Gastrocnemius medialis (tissue), 4 donors: ENCODE measurements at regions of chr5 and their contacts with region 1.

Region 1: GRCh38 chr5:38666668-38667498 is 110.4 kb upstream of the LIFR start:
- DNase-seq: peak; percentile 38 to 61
- ATAC-seq: peak; percentile 92 to 97
- H3K4me3 ChIP-seq: no peak overlapping the region
- H3K27ac ChIP-seq: peak overlapping the region; percentile 44 to 79 (median 70)
- H3K4me1 ChIP-seq: peaks cover 30 to 33% of the 10 kb centered on the region in 2 donors
- H3K27me3 ChIP-seq: no peaks in the 10 kb centered on the region
- CTCF ChIP-seq: peak; percentile 67 to 86 (median 84)
- POLR2A ChIP-seq: no peak

Region 2: DNA sequence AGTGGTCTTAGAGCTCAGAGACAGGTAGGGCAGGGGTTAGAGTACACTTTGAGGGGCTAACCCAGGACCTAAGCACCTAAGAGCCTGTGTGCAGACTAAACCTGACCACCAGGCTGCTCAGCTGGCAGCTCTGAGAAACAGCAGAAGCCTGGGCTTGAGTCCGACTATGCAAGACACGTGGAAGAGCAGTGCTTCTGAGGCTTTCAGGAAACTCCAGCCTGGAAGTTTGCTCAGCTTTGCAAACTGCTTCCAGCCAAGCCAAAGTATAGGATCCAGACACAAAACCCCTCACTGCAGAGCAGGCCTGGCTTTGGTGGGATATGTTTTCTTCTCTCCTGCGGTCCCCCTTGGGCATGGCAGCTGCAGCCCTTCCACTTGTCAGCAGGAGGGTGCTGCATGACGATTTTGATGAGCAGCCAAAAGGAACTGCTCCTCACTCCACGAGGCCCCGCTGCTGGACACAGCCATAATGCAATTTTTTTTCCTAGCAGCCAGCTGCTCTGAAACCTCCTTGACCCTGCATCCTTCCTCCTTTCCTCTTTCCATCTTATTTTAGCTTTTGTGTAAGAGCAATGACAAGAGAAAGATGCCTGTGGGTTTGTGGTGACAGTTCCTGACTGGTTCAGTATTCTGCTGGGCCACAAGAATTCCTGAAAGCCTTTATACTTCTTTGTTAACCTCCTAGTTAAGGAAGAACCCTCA is 233.6 kb before region 1 on chr5:
- in situ Hi-C with region 1: loop called (anchors 5 to 10 kb)
- intact Hi-C with region 1: no loop called
- DNase-seq: no peak
- ATAC-seq: peak; percentile 45 to 50
- H3K4me3 ChIP-seq: no peak overlapping the region
- H3K27ac ChIP-seq: peak overlapping the region in 2 of 4 donors; percentile 5 to 16
- H3K4me1 ChIP-seq: peaks cover 7% of the 10 kb centered on the region in 2 donors
- H3K27me3 ChIP-seq: no peaks in the 10 kb centered on the region
- CTCF ChIP-seq: no peak
- POLR2A ChIP-seq: no peak

Region 3: GRCh38 chr5:38540314-38540713 is 126.6 kb before region 1 on chr5:
- in situ Hi-C with region 1: loop called in 1 of 4 experiments (anchors 10 kb)
- intact Hi-C with region 1: loop called (anchors 5 kb)
- DNase-seq: peak; percentile 81 to 90
- ATAC-seq: peak; percentile 87 to 94
- H3K4me3 ChIP-seq: peak overlapping the region; percentile 5 to 19 (median 11)
- H3K27ac ChIP-seq: peak overlapping the region; percentile 79 to 87 (median 85)
- H3K4me1 ChIP-seq: peaks cover 91 to 94% of the 10 kb centered on the region in 2 donors
- H3K27me3 ChIP-seq: no peaks in the 10 kb centered on the region
- CTCF ChIP-seq: no peak
- POLR2A ChIP-seq: peak; percentile 24 to 45

Region 4: DNA sequence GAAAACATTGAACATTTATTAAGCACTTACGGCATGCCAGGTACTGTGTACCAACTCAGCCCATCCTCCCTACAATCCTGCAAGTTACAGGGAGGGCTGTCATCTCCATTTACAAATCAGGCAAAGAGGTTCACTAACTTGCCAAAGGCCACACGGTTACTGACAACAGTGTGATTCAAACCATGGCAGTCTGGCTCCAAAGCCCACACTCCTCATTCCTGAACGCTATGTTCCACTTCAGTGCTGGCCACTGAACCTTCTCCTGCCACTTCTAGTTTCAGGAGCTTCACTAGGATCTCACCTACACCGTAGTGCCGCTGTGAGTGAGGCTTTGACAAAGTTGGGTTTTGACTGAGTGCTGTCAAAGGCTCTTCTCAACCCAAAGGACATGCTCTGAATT is 103.3 kb before region 1 on chr5:
- in situ Hi-C with region 1: loop called in 2 of 4 experiments (anchors 10 to 25 kb)
- intact Hi-C with region 1: no loop called
- DNase-seq: peak in 1 of 2 donors; percentile 16
- ATAC-seq: peak in 1 of 2 donors; percentile 94
- H3K4me3 ChIP-seq: no peak overlapping the region
- H3K27ac ChIP-seq: peak overlapping the region in 1 of 4 donors; percentile 66
- H3K4me1 ChIP-seq: peaks cover 5 to 20% of the 10 kb centered on the region in 2 donors
- H3K27me3 ChIP-seq: no peaks in the 10 kb centered on the region
- CTCF ChIP-seq: no peak
- POLR2A ChIP-seq: no peak

Region 5: DNA sequence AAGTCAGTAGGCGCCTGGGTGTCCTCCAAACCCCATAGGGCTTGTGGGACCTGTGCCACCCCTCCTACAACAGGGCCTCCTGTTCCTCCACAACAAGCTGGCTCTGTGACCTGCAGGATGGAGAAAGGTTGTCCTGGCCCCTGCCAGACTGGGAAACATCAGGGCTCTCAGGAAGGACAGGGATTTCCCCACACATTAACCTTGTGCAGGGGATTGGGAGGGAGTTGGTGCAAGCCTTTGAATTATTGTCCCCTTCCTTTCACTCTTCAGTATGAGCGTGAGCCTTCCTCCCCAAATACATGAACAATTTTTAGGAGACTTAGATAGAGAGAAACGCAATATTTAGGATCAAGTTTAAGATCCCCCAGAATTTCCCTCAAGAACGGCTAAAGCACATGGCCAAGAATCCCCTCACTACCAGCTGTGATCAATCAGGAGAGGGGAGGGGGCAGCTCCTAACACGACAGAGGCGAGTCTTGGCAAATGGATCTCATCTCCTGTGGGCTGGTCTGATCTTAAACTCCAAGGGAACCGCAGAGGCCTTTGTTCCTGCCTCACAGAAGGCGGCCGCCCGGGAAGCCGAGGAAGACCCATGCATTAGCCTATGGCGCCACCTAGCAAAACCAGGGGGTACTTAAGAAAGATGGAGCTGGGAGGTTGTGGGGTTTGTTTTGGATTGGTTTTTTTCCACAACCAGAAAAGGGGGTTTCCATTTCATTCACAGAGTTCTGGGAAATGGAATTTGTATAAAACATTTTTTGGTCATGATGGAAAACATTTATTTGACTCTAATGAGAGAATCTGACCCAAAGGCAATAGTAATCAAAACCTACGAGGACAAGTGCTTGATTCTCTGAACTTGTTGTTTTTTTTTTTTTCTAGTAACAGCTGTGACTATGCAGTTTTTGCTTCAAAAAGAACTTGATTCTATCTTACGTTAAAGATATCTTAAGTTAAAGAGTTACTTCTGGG is 142.8 kb after region 1 on chr5:
- in situ Hi-C with region 1: loop called in 1 of 4 experiments (anchors 10 kb)
- intact Hi-C with region 1: loop called (anchors 5 kb)
- DNase-seq: peak; percentile 67 to 72
- ATAC-seq: peak; percentile 78 to 91
- H3K4me3 ChIP-seq: no peak overlapping the region
- H3K27ac ChIP-seq: peak overlapping the region; percentile 36 to 47 (median 44)
- H3K4me1 ChIP-seq: peaks cover 9 to 22% of the 10 kb centered on the region in 2 donors
- H3K27me3 ChIP-seq: no peaks in the 10 kb centered on the region
- CTCF ChIP-seq: peak; percentile 80 to 89 (median 81)
- POLR2A ChIP-seq: no peak